ENCODE measurements at regions of chr1 and their contacts with region 1.

Region 1: GRCh38 chr1:12152113-12152891 is 14.5 kb upstream of the TNFRSF1B start:
- DNase-seq: no peak
- H3K4me3 ChIP-seq: no peak overlapping the region
- H3K4me3 Mint-ChIP-seq: peak overlapping the region; percentile 3 to 82 (median 78)
- H3K27ac ChIP-seq: peak overlapping the region; percentile 6
- H3K27ac Mint-ChIP-seq: peak overlapping the region; percentile 89 to 99 (median 98)
- H3K4me1 ChIP-seq: peaks cover 70% of the 10 kb centered on the region
- H3K4me1 Mint-ChIP-seq: peaks cover 78 to 88% (median 80%) of the 10 kb centered on the region in 3 donors
- H3K27me3 ChIP-seq: no peaks in the 10 kb centered on the region
- H3K27me3 Mint-ChIP-seq: no peaks in the 10 kb centered on the region

Region 2: DNA sequence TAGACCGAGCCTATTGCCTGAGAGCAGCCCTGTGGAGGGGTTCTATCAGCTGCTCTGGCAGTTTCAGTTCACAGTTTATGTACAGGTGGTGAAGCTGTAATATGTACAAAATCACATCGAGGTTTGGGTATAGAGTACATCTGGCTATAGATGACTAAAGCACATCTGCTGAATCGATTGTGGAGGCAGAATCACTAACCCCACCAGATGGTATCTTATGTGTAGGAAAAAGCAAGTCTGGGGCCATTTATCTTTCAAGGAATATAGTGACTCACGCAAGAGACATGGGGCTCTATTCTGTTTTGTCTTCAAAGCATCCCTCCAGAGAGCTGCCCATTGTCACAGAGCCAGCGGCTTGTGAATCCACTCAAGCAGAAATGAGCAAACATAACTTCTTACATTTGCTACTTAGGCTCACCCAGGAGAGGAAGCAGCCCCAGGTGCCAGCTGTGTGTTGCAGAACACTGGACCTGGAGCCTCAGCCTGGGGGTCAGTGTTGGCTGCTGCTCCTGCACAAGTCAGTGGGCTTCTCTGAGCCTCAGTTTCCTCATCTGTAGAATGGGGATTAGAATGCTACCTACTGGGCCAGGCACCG is 111.7 kb before region 1 on chr1:
- CTCF ChIA-PET with region 1: no interaction called
- POLR2A ChIA-PET with region 1: no interaction called
- DNase-seq: no peak
- H3K4me3 ChIP-seq: no peak overlapping the region
- H3K4me3 Mint-ChIP-seq: no peak overlapping the region
- H3K27ac ChIP-seq: no peak overlapping the region
- H3K27ac Mint-ChIP-seq: peak overlapping the region in 1 of 8 donors; percentile 84
- H3K4me1 ChIP-seq: no peaks in the 10 kb centered on the region
- H3K4me1 Mint-ChIP-seq: peaks cover 7 to 15% (median 11%) of the 10 kb centered on the region in 3 donors
- H3K27me3 ChIP-seq: no peaks in the 10 kb centered on the region
- H3K27me3 Mint-ChIP-seq: peaks cover 1 to 6% of the 10 kb centered on the region in 2 donors

Region 3: DNA sequence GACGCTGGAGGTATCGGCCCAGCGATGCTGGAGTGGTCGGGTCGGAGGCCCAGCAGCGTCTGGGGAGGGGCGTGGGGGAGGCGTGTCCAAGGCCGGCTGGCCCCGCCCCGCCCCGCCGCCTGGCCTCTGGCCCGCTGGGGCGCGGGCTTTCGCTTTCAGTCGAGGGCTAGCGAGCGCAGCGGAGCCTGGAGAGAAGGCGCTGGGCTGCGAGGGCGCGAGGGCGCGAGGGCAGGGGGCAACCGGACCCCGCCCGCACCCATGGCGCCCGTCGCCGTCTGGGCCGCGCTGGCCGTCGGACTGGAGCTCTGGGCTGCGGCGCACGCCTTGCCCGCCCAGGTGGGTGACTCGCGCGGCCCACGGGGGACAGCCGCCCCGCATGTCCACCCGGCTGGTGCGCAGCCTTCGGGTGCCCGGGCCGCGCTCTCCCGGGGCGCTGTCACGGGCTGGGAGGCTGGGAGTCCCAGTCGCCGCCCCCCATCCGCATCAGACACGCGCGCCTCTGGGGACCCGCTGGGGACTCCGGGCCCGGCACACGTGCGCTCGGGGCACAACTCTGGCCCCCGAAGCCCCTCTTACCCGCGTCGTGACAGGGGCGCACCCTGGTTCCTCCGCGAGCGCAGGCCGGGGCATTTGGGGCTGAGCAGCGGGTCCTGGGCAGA is 14.7 kb after region 1 on chr1 and contains the start of gene TNFRSF1B:
- CTCF ChIA-PET with region 1: interaction called, 9 read pairs
- POLR2A ChIA-PET with region 1: interaction called, 22 read pairs
- DNase-seq: peak; percentile 49 to 78 (median 68)
- H3K4me3 ChIP-seq: peak within 1 kb of the TSS; percentile 91
- H3K4me3 Mint-ChIP-seq: peak within 1 kb of the TSS; percentile 94 to 100 (median 99)
- H3K27ac ChIP-seq: peak within 1 kb of the TSS; percentile 95
- H3K27ac Mint-ChIP-seq: peak within 1 kb of the TSS; percentile 90 to 100 (median 99)
- H3K4me1 ChIP-seq: peaks cover 67% of the 10 kb centered on the region
- H3K4me1 Mint-ChIP-seq: peaks cover 71 to 84% (median 76%) of the 10 kb centered on the region in 3 donors
- H3K27me3 ChIP-seq: no peaks in the 10 kb centered on the region
- H3K27me3 Mint-ChIP-seq: peaks cover 0 to 2% of the 10 kb centered on the region in 2 donors
- total RNA-seq, gene TNFRSF1B: 169 to 174 TPM

Measured in CD8-positive, alpha-beta memory T cell (primary cell).